Activated CD8-positive, alpha-beta memory T cell treated with anti-CD3 and anti-CD28 coated beads, Interleukin-2, amount 10 ng/mL, durations not matched to agents 7 days and 5 days (primary cell): ENCODE measurements at regions of chr6 and their contacts with region 1.

Region 1: GRCh38 chr6:42547407-42548329 is 16.2 kb upstream of the UBR2 start:
- DNase-seq: peak; percentile 91
- ATAC-seq: peak; percentile 100
- H3K4me3 Mint-ChIP-seq: peak overlapping the region; percentile 59
- H3K27ac Mint-ChIP-seq: peak overlapping the region; percentile 40
- H3K4me1 Mint-ChIP-seq: peaks cover 22% of the 10 kb centered on the region
- H3K27me3 Mint-ChIP-seq: peaks cover 10% of the 10 kb centered on the region

Region 2: GRCh38 chr6:42104095-42104806 is 443.4 kb before region 1 on chr6:
- CTCF ChIA-PET with region 1: interaction called, 13 read pairs
- DNase-seq: peak; percentile 86
- ATAC-seq: peak; percentile 87
- H3K4me3 Mint-ChIP-seq: peak overlapping the region; percentile 54
- H3K27ac Mint-ChIP-seq: peak overlapping the region; percentile 75
- H3K4me1 Mint-ChIP-seq: peaks cover 42% of the 10 kb centered on the region
- H3K27me3 Mint-ChIP-seq: no peaks in the 10 kb centered on the region

Region 3: GRCh38 chr6:42279144-42279781 is 268.4 kb before region 1 on chr6:
- CTCF ChIA-PET with region 1: interaction called, 11 read pairs
- DNase-seq: peak; percentile 77
- ATAC-seq: peak; percentile 65
- H3K4me3 Mint-ChIP-seq: peak overlapping the region; percentile 27
- H3K27ac Mint-ChIP-seq: peak overlapping the region; percentile 90
- H3K4me1 Mint-ChIP-seq: peaks cover 66% of the 10 kb centered on the region
- H3K27me3 Mint-ChIP-seq: no peaks in the 10 kb centered on the region

Region 4: GRCh38 chr6:42338663-42339218 is 208.9 kb before region 1 on chr6:
- CTCF ChIA-PET with region 1: interaction called, 18 read pairs
- DNase-seq: no peak
- ATAC-seq: no peak
- H3K4me3 Mint-ChIP-seq: no peak overlapping the region
- H3K27ac Mint-ChIP-seq: peak overlapping the region; percentile 84
- H3K4me1 Mint-ChIP-seq: peaks cover 85% of the 10 kb centered on the region
- H3K27me3 Mint-ChIP-seq: no peaks in the 10 kb centered on the region

Region 5: DNA sequence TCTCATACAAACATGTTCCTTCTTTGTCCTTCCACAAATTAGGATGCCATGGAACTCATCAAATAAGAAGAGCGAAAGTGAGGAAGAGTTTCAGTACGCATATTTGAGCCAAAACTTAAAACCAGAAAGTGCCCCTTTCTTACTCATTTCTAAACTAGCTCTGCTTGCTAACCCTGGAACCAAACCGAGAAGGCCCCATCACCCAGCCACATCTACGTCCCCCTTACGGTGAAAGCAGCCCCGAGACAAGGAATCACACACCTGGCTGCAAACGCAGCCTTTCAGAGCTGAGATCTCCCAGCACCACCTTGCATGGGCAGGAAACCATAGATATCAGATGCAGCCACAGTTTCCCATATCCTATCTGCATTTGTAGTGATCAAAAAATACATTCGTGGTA is 124.4 kb before region 1 on chr6:
- CTCF ChIA-PET with region 1: interaction called, 16 read pairs
- DNase-seq: peak; percentile 78
- ATAC-seq: peak; percentile 75
- H3K4me3 Mint-ChIP-seq: peak overlapping the region; percentile 24
- H3K27ac Mint-ChIP-seq: peak overlapping the region; percentile 35
- H3K4me1 Mint-ChIP-seq: peaks cover 64% of the 10 kb centered on the region
- H3K27me3 Mint-ChIP-seq: peaks cover 6% of the 10 kb centered on the region

Region 6: GRCh38 chr6:42511803-42512422 is 35.8 kb before region 1 on chr6:
- CTCF ChIA-PET with region 1: interaction called, 26 read pairs
- DNase-seq: no peak
- ATAC-seq: no peak
- H3K4me3 Mint-ChIP-seq: no peak overlapping the region
- H3K27ac Mint-ChIP-seq: no peak overlapping the region
- H3K4me1 Mint-ChIP-seq: peaks cover 7% of the 10 kb centered on the region
- H3K27me3 Mint-ChIP-seq: no peaks in the 10 kb centered on the region

Region 7: GRCh38 chr6:42572523-42572922 is 24.9 kb after region 1 on chr6:
- CTCF ChIA-PET with region 1: interaction called, 10 read pairs
- DNase-seq: no peak
- ATAC-seq: peak; percentile 34
- H3K4me3 Mint-ChIP-seq: peak overlapping the region; percentile 24
- H3K27ac Mint-ChIP-seq: peak overlapping the region; percentile 63
- H3K4me1 Mint-ChIP-seq: peaks cover 45% of the 10 kb centered on the region
- H3K27me3 Mint-ChIP-seq: no peaks in the 10 kb centered on the region

Region 8: GRCh38 chr6:42674780-42675179 is 127.1 kb after region 1 on chr6:
- CTCF ChIA-PET with region 1: no interaction called
- DNase-seq: no peak
- ATAC-seq: no peak
- H3K4me3 Mint-ChIP-seq: no peak overlapping the region
- H3K27ac Mint-ChIP-seq: no peak overlapping the region
- H3K4me1 Mint-ChIP-seq: peaks cover 7% of the 10 kb centered on the region
- H3K27me3 Mint-ChIP-seq: no peaks in the 10 kb centered on the region

Region 9: DNA sequence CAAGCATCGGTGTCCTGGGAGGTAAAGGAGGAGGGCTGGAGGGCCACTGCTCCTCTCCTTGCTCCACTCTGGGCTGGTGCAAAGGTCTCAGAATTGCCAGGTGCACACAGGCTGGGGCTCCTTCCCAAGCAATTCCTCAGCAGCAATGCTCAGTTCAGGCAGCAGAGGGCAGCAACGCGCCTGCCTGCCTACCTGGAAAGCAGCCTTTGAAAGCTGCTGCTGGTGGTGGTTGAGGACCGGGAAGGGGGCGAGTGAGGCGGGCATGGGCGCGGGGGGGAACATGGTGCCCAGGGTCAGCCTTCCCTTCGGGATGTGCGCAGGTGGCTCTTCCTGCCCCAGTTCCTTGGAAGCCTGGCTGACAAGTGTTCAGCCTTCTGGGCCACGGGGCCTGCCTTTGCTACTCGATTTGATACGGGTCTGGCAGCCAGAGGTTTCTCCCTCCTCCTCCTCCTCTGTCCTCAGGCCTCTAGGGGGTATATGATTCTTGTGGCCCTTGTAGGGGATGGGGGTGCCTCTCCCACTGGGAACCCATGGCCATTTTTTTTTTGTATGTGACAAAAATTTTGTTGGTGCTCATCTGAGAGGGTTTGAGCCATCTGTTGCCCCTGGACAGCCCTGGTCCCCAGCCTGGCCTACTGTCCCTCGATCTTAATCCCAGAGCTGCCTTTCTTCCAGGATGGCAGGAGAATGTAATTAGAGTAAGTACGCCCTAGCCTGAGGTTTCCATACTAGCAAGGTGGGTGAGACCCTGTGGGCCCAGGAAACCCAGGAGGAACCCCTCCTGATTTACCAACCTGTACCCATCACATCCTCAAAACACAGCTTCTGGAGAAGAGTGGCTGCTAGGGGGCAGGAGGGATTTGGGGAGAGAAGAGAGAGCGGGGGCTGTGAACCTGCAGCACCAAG is 1119.8 kb after region 1 on chr6:
- CTCF ChIA-PET with region 1: no interaction called
- DNase-seq: peak; percentile 86
- ATAC-seq: peak; percentile 75
- H3K4me3 Mint-ChIP-seq: no peak overlapping the region
- H3K27ac Mint-ChIP-seq: peak overlapping the region; percentile 24
- H3K4me1 Mint-ChIP-seq: peaks cover 38% of the 10 kb centered on the region
- H3K27me3 Mint-ChIP-seq: peaks cover 11% of the 10 kb centered on the region